CD8-positive, alpha-beta memory T cell (primary cell): ENCODE measurements at regions of chr6 and their contacts with region 1.

Region 1: GRCh38 chr6:2971420-2972218 is at the start of gene SERPINB6:
- DNase-seq: peak; percentile 23 to 62 (median 39)
- H3K4me3 ChIP-seq: peak within 1 kb of the TSS; percentile 63
- H3K4me3 Mint-ChIP-seq: peak within 1 kb of the TSS; percentile 88 to 95 (median 92)
- H3K27ac ChIP-seq: peak within 1 kb of the TSS; percentile 81
- H3K27ac Mint-ChIP-seq: peak within 1 kb of the TSS; percentile 85 to 98 (median 92)
- H3K4me1 ChIP-seq: peaks cover 26% of the 10 kb centered on the region
- H3K4me1 Mint-ChIP-seq: peaks cover 42 to 70% (median 48%) of the 10 kb centered on the region in 3 donors
- H3K27me3 ChIP-seq: no peaks in the 10 kb centered on the region
- H3K27me3 Mint-ChIP-seq: peaks cover 0 to 6% of the 10 kb centered on the region in 2 donors
- total RNA-seq, gene SERPINB6: 62.1 to 66.0 TPM

Region 2: DNA sequence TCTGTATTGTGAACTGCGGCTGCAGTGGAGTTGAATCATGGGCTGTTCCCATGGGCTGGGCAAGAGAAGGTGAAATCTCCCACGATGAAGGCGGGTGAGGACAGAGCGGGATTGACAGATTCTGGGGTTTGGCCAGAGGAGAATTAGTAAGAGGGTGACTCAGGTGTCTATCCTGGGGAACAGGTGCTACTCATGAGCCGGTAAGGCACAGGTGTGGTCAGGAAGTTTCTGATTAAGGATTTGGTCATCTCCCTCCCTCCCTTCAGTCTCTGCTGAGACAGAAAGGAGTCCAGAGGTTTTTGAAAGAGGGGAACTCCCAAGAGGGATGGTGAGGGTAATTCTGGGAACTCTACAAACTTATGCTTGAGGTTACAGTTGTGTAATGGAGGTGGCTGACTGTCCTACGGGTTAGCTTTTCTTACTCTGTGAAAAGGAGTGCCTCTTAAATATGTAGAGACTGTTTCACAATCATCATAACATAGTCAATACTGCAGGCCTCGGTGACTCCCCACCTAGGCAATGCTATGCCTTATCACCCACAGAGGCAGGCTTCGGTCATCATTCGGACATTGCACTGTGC is 161.4 kb before region 1 on chr6:
- CTCF ChIA-PET with region 1: no interaction called
- POLR2A ChIA-PET with region 1: no interaction called
- DNase-seq: no peak
- H3K4me3 ChIP-seq: no peak overlapping the region
- H3K4me3 Mint-ChIP-seq: no peak overlapping the region
- H3K27ac ChIP-seq: no peak overlapping the region
- H3K27ac Mint-ChIP-seq: peak overlapping the region in 1 of 8 donors; percentile 14
- H3K4me1 ChIP-seq: no peaks in the 10 kb centered on the region
- H3K4me1 Mint-ChIP-seq: no peaks in the 10 kb centered on the region
- H3K27me3 ChIP-seq: no peaks in the 10 kb centered on the region
- H3K27me3 Mint-ChIP-seq: peaks cover 0 to 2% of the 10 kb centered on the region in 2 donors

Region 3: DNA sequence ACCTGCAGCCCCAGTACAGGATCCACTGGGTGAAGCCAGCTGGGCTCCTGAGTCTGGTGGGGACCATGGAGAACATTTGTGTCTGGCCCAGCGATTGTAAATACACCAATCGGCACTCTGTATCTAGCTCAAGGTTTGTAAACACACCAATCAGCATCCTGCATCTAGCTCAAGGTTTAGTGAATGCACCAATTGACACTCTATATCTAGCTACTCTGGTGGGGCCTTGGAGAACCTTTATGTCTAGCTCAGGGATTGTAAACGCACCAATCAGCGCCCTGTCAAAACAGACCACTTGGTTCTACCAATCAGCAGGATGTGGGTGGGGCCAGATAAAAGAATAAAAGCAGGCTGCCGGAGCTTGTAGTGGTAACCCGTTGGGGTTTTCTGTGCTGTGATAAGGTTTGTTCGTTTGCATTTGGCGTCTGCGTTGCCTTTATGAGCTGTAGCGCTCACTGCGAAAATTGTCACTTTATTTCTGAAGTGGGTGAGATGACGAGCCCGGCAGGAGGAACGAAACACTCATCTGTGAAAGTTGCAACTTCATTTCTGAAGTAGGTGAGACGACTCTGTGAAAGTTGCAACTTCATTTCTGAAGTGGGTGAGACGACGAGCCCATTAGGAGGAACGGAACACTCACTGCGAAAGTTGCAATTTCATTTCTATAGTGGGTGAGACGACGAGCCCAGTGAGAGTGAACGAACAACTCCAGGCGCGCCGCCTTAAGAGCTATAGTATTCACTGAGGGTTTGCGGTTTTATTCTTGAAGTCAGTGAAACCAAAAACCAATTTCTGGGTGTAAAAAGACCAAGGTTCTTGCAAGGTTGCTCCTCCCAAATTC is 31.4 kb before region 1 on chr6:
- CTCF ChIA-PET with region 1: interaction called, 9 read pairs
- POLR2A ChIA-PET with region 1: interaction called, 17 read pairs
- DNase-seq: peak; percentile 46 to 86 (median 78)
- H3K4me3 ChIP-seq: peak overlapping the region; percentile 85
- H3K4me3 Mint-ChIP-seq: peak overlapping the region; percentile 71 to 92 (median 89)
- H3K27ac ChIP-seq: peak overlapping the region; percentile 60
- H3K27ac Mint-ChIP-seq: peak overlapping the region; percentile 90 to 99 (median 94)
- H3K4me1 ChIP-seq: peaks cover 73% of the 10 kb centered on the region
- H3K4me1 Mint-ChIP-seq: peaks cover 59 to 70% (median 61%) of the 10 kb centered on the region in 3 donors
- H3K27me3 ChIP-seq: no peaks in the 10 kb centered on the region
- H3K27me3 Mint-ChIP-seq: peaks cover 0 to 1% of the 10 kb centered on the region in 2 donors